Endothelial cell of umbilical vein (primary cell): ENCODE measurements at regions of chr1 and their contacts with region 1.

Region 1: GRCh38 chr1:160193091-160193819 is 2.9 kb downstream of the CASQ1 start:
- DNase-seq: peak; percentile 86
- H3K4me3 ChIP-seq: no peak overlapping the region
- H3K27ac ChIP-seq: no peak overlapping the region
- H3K4me1 ChIP-seq: peaks cover 5% of the 10 kb centered on the region
- H3K27me3 ChIP-seq: no peaks in the 10 kb centered on the region
- CTCF ChIP-seq: peak; percentile 90 to 91
- POLR2A ChIP-seq: no peak

Region 2: DNA sequence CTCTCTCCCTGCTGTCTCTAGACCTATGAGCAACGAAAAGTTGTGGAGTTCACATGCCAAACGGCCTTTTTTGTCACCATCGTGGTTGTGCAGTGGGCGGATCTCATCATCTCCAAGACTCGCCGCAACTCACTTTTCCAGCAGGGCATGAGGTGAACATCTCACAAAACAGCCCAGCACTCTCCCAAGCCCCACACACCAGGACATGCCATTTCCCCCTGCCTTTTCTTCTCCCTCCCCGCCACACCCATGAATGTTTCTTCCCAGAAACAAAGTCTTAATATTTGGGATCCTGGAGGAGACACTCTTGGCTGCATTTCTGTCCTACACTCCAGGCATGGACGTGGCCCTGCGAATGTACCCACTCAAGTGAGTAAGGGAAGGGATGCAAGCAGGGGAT is 11.6 kb before region 1 on chr1:
- CTCF ChIA-PET with region 1: interaction called, 11 read pairs
- POLR2A ChIA-PET with region 1: no interaction called
- dilution Hi-C with region 1: no loop called
- intact Hi-C with region 1: no loop called
- DNase-seq: no peak
- H3K4me3 ChIP-seq: no peak overlapping the region
- H3K27ac ChIP-seq: no peak overlapping the region
- H3K4me1 ChIP-seq: no peaks in the 10 kb centered on the region
- H3K27me3 ChIP-seq: peaks cover 9 to 12% of the 10 kb centered on the region in 2 experiments
- CTCF ChIP-seq: no peak
- POLR2A ChIP-seq: no peak

Region 3: GRCh38 chr1:160226623-160227022 is 33.4 kb after region 1 on chr1:
- CTCF ChIA-PET with region 1: interaction called, 511 read pairs
- POLR2A ChIA-PET with region 1: no interaction called
- dilution Hi-C with region 1: no loop called
- intact Hi-C with region 1: no loop called
- DNase-seq: no peak
- H3K4me3 ChIP-seq: no peak overlapping the region
- H3K27ac ChIP-seq: no peak overlapping the region
- H3K4me1 ChIP-seq: no peaks in the 10 kb centered on the region
- H3K27me3 ChIP-seq: no peaks in the 10 kb centered on the region
- CTCF ChIP-seq: no peak
- POLR2A ChIP-seq: no peak

Region 4: DNA sequence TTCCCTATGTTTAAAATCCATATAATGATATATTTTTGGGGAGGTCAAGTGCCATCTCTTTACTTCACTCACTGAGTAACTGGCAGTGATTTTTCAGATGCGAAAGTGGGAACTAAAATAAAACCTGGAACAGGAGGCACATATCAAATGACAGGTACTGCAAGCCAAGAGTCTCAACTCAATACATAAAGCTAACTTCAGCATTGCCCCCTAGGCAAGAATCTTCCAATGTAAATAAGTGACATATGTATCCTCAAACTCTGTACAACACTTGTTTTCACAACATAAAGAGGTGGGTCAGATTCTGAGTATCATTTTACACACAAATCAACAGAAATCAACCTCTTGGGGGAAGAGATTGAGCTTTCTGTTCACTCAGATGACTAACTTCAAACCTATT is 51.0 kb after region 1 on chr1:
- CTCF ChIA-PET with region 1: interaction called, 61 read pairs
- POLR2A ChIA-PET with region 1: no interaction called
- dilution Hi-C with region 1: no loop called
- intact Hi-C with region 1: no loop called
- DNase-seq: peak; percentile 28
- H3K4me3 ChIP-seq: no peak overlapping the region
- H3K27ac ChIP-seq: no peak overlapping the region
- H3K4me1 ChIP-seq: peaks cover 5% of the 10 kb centered on the region
- H3K27me3 ChIP-seq: no peaks in the 10 kb centered on the region
- CTCF ChIP-seq: no peak
- POLR2A ChIP-seq: no peak

Region 5: GRCh38 chr1:160267284-160267991 is 74.2 kb after region 1 on chr1:
- CTCF ChIA-PET with region 1: interaction called, 16 read pairs
- POLR2A ChIA-PET with region 1: no interaction called
- dilution Hi-C with region 1: no loop called
- intact Hi-C with region 1: no loop called
- DNase-seq: no peak
- H3K4me3 ChIP-seq: no peak overlapping the region
- H3K27ac ChIP-seq: no peak overlapping the region
- H3K4me1 ChIP-seq: peaks cover 5% of the 10 kb centered on the region
- H3K27me3 ChIP-seq: peaks cover 0 to 2% of the 10 kb centered on the region in 2 experiments
- CTCF ChIP-seq: no peak
- POLR2A ChIP-seq: no peak

Region 6: DNA sequence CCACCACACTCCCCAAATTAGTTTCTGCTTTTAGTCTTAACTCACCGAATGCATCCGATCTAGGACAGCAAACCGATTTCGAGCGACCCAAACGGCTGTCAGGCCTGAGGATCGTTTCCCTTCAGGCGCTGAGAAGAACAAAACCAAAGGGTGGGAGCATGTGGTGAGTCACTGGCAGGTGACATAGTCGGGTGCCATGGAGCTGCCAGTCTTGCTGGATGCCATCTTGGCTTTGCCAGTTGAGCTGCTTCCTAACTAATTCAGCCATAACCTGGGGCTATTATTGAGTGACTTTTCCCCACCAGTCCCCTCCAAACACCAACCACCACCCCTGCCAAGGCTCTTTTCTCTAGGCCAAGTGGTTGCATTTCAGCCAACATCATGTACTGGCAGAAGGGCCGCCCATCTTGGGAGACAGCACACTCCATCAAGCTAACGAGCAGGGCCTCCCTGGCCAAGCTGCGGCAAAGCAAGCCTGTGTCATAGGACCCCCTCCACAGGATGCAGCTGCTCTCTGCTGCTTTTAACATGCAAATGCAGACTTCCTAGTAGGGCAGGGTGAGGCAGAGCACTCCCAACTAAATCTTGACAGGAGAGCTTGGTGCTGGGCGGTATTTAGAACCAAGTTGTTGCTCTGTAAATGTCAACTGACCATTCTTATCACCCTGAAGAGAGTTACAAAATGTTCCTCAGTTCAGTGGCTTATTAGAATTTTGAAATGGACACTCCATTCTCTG is 114.0 kb after region 1 on chr1:
- CTCF ChIA-PET with region 1: interaction called, 12 read pairs
- POLR2A ChIA-PET with region 1: no interaction called
- dilution Hi-C with region 1: no loop called
- intact Hi-C with region 1: no loop called
- DNase-seq: no peak
- H3K4me3 ChIP-seq: no peak overlapping the region
- H3K27ac ChIP-seq: no peak overlapping the region
- H3K4me1 ChIP-seq: no peaks in the 10 kb centered on the region
- H3K27me3 ChIP-seq: no peaks in the 10 kb centered on the region
- CTCF ChIP-seq: no peak
- POLR2A ChIP-seq: no peak